Activated CD4-positive, alpha-beta T cell treated with anti-CD3 and anti-CD28 coated beads for 36 hours (primary cell): ENCODE measurements at regions of chr10 and their contacts with region 1.

Region 1: DNA sequence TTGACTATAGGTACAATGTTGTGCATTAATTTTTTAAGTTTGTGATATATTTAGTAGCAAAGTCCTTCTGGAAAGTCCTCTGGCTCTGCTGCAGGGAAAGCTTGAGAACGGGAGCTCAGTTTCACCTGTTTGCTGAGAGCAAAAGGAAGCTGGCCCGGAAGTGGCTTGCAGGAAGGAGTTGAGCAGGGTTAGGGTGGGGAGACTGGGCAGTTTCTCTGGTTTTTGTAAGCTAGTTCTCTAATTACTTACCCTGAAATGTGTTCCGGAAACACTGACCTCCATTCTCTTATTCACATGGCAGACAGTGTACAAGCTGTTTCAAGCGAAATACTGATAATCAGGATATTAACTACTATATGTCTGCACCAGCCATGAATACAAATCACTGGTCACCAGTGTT is 22.3 kb downstream of the MAP3K8 start:
- DNase-seq: peak; percentile 31
- ATAC-seq: peak; percentile 36
- H3K4me3 Mint-ChIP-seq: no peak overlapping the region
- H3K27ac Mint-ChIP-seq: no peak overlapping the region
- H3K4me1 Mint-ChIP-seq: peaks cover 22% of the 10 kb centered on the region
- H3K27me3 Mint-ChIP-seq: no peaks in the 10 kb centered on the region

Region 2: GRCh38 chr10:30431435-30431911 is 24.8 kb before region 1 on chr10:
- CTCF ChIA-PET with region 1: no interaction called
- POLR2A ChIA-PET with region 1: no interaction called
- intact Hi-C with region 1: no loop called
- DNase-seq: no peak
- ATAC-seq: no peak
- H3K4me3 Mint-ChIP-seq: no peak overlapping the region
- H3K27ac Mint-ChIP-seq: no peak overlapping the region
- H3K4me1 Mint-ChIP-seq: peaks cover 37% of the 10 kb centered on the region
- H3K27me3 Mint-ChIP-seq: no peaks in the 10 kb centered on the region

Region 3: DNA sequence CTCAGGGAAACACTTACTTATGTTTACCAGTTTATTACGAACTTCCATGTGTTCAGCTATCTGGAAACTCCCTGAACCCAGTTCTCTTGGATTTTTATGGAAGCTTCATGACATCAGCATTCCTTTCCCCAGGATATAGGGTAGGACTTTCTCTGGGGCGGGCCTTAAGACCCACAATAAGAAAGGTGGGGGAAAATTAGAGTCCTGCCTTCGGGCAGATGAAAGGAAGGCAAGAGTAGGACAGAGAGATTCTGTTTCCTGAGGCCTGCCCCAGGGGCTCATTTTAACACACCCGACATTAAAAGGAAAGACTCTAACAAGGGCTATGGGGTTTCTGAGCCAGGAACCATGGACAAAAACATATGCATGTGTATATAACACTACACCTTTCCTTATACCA is 63.4 kb after region 1 on chr10:
- CTCF ChIA-PET with region 1: no interaction called
- POLR2A ChIA-PET with region 1: no interaction called
- intact Hi-C with region 1: loop called in 1 of 2 experiments (anchors 5 kb)
- DNase-seq: no peak
- ATAC-seq: no peak
- H3K4me3 Mint-ChIP-seq: no peak overlapping the region
- H3K27ac Mint-ChIP-seq: no peak overlapping the region
- H3K4me1 Mint-ChIP-seq: peaks cover 5% of the 10 kb centered on the region
- H3K27me3 Mint-ChIP-seq: no peaks in the 10 kb centered on the region